CD4-positive, alpha-beta T cell (primary cell): ENCODE measurements at regions of chr1 and their contacts with region 1.

Region 1: DNA sequence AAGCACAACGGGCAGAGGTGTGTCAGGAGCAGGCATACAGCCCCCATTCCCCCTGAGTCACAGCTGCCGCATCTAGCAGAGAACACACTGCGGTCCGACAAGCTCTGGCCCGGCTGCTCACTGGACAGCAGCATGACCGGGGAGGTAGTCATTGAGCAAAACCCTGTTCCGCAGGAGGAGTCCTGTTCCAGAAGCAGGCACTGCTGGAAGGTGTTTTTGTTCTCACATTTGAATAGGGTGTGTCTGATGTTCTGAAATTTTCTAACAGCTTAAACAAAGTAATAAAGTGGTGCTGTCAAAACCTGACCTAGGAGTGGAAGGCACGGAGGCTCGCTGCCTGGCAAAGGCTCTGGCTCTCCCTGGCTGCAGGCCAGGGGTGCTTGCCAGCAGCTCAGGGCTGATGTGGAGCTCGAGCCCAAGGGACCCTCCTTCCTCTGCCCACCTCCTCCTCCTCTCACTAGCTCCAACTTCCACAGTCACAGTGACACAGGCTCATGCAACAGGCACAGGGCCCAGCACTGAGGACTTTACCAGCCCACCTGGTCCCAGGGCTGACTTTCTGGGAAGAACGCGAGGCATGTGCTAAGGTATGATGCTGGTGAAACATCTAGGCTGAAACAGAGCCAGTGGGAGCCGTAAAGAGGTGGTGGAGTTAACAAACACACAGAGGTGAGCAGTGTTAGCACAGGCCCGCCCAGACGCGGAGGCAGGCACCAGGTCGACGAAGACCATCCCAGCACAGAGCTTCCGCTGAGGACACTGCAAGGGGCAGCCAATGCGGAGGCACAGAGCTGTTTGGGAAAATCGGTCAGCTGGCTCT is 118.6 kb upstream of the IFFO2 start:
- DNase-seq: peak in 1 of 14 experiments; percentile 23
- ATAC-seq: peak; percentile 19
- H3K4me3 ChIP-seq: peak overlapping the region; percentile 25
- H3K4me3 Mint-ChIP-seq: peak overlapping the region; percentile 72
- H3K27ac ChIP-seq: no peak overlapping the region
- H3K27ac Mint-ChIP-seq: peak overlapping the region; percentile 83
- H3K4me1 ChIP-seq: peaks cover 58% of the 10 kb centered on the region
- H3K4me1 Mint-ChIP-seq: peaks cover 63% of the 10 kb centered on the region
- H3K27me3 ChIP-seq: no peaks in the 10 kb centered on the region
- H3K27me3 Mint-ChIP-seq: no peaks in the 10 kb centered on the region
- CTCF ChIP-seq: no peak

Region 2: DNA sequence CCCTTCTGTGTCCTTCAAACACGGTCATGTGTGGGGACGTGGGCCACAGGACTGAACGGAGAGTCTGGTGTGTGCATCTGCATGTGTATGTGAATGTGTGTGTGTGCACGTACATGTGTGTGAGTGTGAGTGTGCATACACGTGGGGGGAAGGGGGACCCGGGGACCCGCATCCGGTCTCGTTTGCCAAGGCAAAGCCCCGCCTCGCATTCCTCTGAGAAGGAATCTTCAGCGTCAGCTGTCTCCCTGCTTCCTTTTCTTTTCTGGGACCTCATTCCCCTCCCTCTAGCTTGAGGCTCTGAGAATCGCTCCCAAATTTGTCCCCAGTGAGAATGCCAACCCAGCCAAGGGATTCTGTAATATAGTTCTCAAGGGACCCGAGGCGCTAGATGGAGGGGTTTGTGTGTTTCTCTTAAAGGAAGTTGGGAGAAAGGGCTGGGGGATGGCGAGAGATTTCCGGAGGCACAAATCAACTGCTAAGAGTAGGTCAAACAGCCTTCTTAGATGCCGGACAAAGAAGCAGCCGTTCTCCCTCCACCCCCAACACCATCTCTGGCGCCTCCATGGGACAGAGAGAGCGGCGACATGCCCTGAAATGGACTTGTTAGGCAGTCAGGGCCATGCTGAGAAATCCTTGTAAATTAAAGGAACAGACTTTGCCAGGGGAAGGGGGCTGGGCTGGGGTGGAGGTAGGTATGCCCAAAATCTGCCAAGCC is 125.3 kb before region 1 on chr1:
- CTCF ChIA-PET with region 1: no interaction called
- POLR2A ChIA-PET with region 1: interaction called, 18 read pairs
- intact Hi-C with region 1: no loop called
- DNase-seq: peak in 3 of 14 experiments; percentile 30 to 57 (median 49)
- ATAC-seq: no peak
- H3K4me3 ChIP-seq: peak overlapping the region; percentile 50
- H3K4me3 Mint-ChIP-seq: peak overlapping the region; percentile 99
- H3K27ac ChIP-seq: peak overlapping the region; percentile 95
- H3K27ac Mint-ChIP-seq: peak overlapping the region; percentile 99
- H3K4me1 ChIP-seq: peaks cover 100% of the 10 kb centered on the region
- H3K4me1 Mint-ChIP-seq: peaks cover 97% of the 10 kb centered on the region
- H3K27me3 ChIP-seq: no peaks in the 10 kb centered on the region
- H3K27me3 Mint-ChIP-seq: no peaks in the 10 kb centered on the region
- CTCF ChIP-seq: no peak

Region 3: GRCh38 chr1:18956369-18957135 is 118.6 kb before region 1 on chr1 and contains the start of gene IFFO2:
- CTCF ChIA-PET with region 1: no interaction called
- POLR2A ChIA-PET with region 1: interaction called, 21 read pairs
- intact Hi-C with region 1: loop called in 1 of 2 experiments (anchors 2 kb)
- DNase-seq: peak in 13 of 14 experiments; percentile 97 to 100 (median 98)
- ATAC-seq: peak; percentile 76
- H3K4me3 ChIP-seq: peak within 1 kb of the TSS; percentile 83
- H3K4me3 Mint-ChIP-seq: peak within 1 kb of the TSS; percentile 99
- H3K27ac ChIP-seq: peak within 1 kb of the TSS in 1 of 2 donors; percentile 74
- H3K27ac Mint-ChIP-seq: peak within 1 kb of the TSS; percentile 99
- H3K4me1 ChIP-seq: peaks cover 59% of the 10 kb centered on the region
- H3K4me1 Mint-ChIP-seq: peaks cover 65% of the 10 kb centered on the region
- H3K27me3 ChIP-seq: no peaks in the 10 kb centered on the region
- H3K27me3 Mint-ChIP-seq: no peaks in the 10 kb centered on the region
- CTCF ChIP-seq: no peak
- total RNA-seq, gene IFFO2: 106 to 112 TPM

Region 4: DNA sequence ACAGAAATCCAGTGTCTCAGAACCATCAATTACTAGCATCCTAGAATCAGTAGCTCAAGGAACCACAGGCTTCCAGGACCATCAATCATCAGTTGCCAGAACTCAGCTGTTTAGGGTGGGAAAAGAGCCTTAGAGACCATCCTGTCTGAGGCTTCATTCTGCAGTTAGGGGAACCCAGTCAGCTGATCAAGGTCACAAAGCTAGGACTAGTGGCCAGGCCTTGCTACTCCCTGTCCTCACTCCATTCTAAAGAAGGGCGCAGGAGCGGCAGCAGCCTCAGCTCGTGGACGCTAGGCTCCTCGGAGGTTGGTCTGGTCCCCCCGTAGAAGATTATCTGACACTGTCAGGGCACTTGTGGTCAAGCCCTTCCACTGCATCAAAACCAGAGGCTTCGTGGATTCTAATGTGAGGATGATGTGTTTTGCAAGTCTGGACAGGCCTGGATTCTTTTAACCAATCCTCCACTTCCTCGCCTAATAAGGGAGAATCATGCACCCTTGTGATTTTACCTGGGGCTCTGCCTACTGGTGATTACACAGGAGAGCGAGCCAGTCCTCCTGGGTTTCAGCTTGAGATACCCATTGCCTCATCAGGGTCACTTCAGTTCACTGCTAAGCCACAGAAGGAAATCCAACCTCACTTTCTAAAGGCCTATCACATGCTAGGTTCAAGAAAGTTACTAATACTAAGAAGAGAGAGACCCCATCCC is 76.9 kb before region 1 on chr1:
- CTCF ChIA-PET with region 1: no interaction called
- POLR2A ChIA-PET with region 1: no interaction called
- intact Hi-C with region 1: no loop called
- DNase-seq: no peak
- ATAC-seq: no peak
- H3K4me3 ChIP-seq: no peak overlapping the region
- H3K4me3 Mint-ChIP-seq: no peak overlapping the region
- H3K27ac ChIP-seq: no peak overlapping the region
- H3K27ac Mint-ChIP-seq: no peak overlapping the region
- H3K4me1 ChIP-seq: peaks cover 4% of the 10 kb centered on the region
- H3K4me1 Mint-ChIP-seq: no peaks in the 10 kb centered on the region
- H3K27me3 ChIP-seq: no peaks in the 10 kb centered on the region
- H3K27me3 Mint-ChIP-seq: no peaks in the 10 kb centered on the region
- CTCF ChIP-seq: no peak

Region 5: GRCh38 chr1:19010995-19011844 is 63.9 kb before region 1 on chr1:
- CTCF ChIA-PET with region 1: no interaction called
- POLR2A ChIA-PET with region 1: interaction called, 6 read pairs
- intact Hi-C with region 1: loop called (anchors 2 to 10 kb)
- DNase-seq: peak; percentile 20 to 80 (median 62)
- ATAC-seq: peak; percentile 91
- H3K4me3 ChIP-seq: peak overlapping the region; percentile 15
- H3K4me3 Mint-ChIP-seq: peak overlapping the region; percentile 14
- H3K27ac ChIP-seq: no peak overlapping the region
- H3K27ac Mint-ChIP-seq: peak overlapping the region; percentile 6
- H3K4me1 ChIP-seq: peaks cover 15% of the 10 kb centered on the region
- H3K4me1 Mint-ChIP-seq: peaks cover 29% of the 10 kb centered on the region
- H3K27me3 ChIP-seq: no peaks in the 10 kb centered on the region
- H3K27me3 Mint-ChIP-seq: peaks cover 5% of the 10 kb centered on the region
- CTCF ChIP-seq: no peak

Region 6: DNA sequence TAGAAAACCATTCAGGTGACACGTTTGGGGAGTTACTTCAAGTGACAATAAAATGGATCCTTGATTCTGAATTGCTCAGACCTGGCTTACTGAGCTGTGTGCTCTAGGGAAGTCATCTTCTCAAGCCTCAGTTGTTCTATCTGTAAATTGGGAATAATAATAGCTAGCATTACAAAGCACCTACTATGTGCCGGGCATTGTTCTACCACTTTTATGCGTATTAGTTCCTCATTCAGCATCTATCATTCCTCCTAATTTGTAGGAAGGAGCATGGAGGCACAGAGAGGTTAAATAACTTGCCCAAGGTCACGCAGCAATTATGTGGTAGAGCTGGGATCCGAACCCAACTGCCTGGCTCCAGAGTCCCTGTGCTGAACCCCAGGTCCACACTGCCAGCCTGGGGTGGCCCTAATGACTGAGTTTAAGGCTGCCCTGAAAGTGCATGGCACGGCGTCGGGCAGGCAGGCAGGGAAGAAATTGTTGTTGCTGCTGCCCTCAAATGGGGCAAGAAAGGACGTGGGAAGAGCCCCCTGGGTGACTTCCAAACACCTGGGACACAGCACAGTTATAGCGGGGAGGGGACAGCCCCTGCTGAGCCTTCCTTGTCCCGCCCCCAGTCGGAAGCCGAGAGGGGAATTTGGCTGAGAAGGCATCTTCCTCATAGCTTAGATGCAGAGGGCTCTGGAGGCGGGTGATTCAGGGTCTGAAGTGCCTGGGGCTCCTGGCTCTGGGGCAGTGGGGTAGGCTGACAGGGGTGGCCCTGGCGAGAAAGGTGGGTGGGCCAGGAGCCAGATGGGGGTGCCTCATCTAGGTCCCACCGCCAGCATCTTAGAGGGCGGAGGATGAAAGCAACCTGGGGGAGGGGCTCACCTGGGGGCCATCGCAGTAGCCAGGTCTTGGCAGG is 32.2 kb before region 1 on chr1:
- CTCF ChIA-PET with region 1: no interaction called
- POLR2A ChIA-PET with region 1: interaction called, 13 read pairs
- intact Hi-C with region 1: no loop called
- DNase-seq: no peak
- ATAC-seq: no peak
- H3K4me3 ChIP-seq: no peak overlapping the region
- H3K4me3 Mint-ChIP-seq: no peak overlapping the region
- H3K27ac ChIP-seq: no peak overlapping the region
- H3K27ac Mint-ChIP-seq: no peak overlapping the region
- H3K4me1 ChIP-seq: peaks cover 3% of the 10 kb centered on the region
- H3K4me1 Mint-ChIP-seq: peaks cover 4% of the 10 kb centered on the region
- H3K27me3 ChIP-seq: peaks cover 0 to 7% of the 10 kb centered on the region in 2 experiments
- H3K27me3 Mint-ChIP-seq: peaks cover 17% of the 10 kb centered on the region
- CTCF ChIP-seq: no peak

Region 7: DNA sequence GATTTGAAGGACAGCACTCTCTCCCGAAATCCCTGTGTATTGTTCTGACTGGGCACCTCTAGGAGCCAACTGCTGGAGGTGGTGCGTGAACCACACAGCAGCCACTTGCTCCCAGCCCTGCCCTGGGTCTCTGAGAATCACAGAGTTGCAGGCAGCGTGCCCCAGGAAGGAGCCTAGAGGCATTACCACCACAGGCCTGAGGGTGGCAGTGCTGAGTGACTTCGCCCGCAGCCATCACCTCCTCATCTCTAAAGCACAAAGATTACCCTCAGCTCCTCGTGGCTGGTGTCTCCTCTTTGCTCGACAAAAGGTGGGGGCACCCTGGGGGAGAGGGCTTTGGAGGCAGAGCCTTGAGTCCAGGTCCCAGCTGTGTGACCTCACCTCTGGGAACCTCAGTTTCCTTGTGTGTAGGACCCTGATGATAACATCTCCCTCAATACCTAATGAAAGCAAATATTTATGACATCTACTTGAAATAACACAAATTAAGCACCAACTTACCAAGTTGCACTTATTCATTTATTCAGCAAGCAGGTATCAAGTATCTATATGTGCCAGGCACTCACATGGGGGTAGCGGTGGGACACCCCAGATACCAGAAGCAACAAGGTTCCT is 1301.9 kb after region 1 on chr1:
- CTCF ChIA-PET with region 1: no interaction called
- POLR2A ChIA-PET with region 1: no interaction called
- intact Hi-C with region 1: no loop called
- DNase-seq: peak; percentile 10 to 66 (median 50)
- ATAC-seq: peak; percentile 84
- H3K4me3 ChIP-seq: no peak overlapping the region
- H3K4me3 Mint-ChIP-seq: no peak overlapping the region
- H3K27ac ChIP-seq: no peak overlapping the region
- H3K27ac Mint-ChIP-seq: no peak overlapping the region
- H3K4me1 ChIP-seq: peaks cover 3% of the 10 kb centered on the region
- H3K4me1 Mint-ChIP-seq: no peaks in the 10 kb centered on the region
- H3K27me3 ChIP-seq: peaks cover 5 to 11% of the 10 kb centered on the region in 2 experiments
- H3K27me3 Mint-ChIP-seq: peaks cover 74% of the 10 kb centered on the region
- CTCF ChIP-seq: peak; percentile 52